Left lung (tissue), 14 donors: ENCODE measurements at regions of chrX and their contacts with region 1.

Region 1: DNA sequence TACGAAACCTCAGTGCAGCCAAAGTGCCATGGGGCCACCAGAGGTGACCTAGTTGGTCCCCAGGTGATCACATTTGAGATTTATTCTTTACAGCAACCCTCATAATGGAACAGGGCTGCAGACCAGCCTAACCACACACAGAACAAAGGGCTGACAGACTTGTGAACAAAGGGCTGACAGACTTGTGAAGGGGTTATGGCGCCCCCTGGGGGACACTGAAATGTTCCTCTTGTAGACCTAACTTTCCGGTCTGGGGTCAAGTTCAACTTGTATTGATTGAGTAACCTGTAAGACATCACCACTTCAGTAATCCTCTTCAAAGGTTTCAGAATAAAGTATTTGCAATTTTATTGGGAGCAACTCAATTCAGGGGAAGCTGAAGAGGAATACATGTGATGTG is 175.9 kb upstream of the RPS6KA3 start:
- DNase-seq: peak; percentile 37 to 80 (median 72)
- ATAC-seq: peak; percentile 97
- H3K4me3 ChIP-seq: no peak overlapping the region
- H3K27ac ChIP-seq: no peak overlapping the region
- H3K4me1 ChIP-seq: peaks cover 0 to 5% of the 10 kb centered on the region in 2 donors
- H3K27me3 ChIP-seq: peaks cover 0 to 3% of the 10 kb centered on the region in 2 donors
- CTCF ChIP-seq: peak; percentile 54 to 57

Region 2: GRCh38 chrX:20197641-20198210 is 244.9 kb before region 1 on chrX:
- intact Hi-C with region 1: no loop called
- DNase-seq: no peak
- ATAC-seq: no peak
- H3K4me3 ChIP-seq: no peak overlapping the region
- H3K27ac ChIP-seq: no peak overlapping the region
- H3K4me1 ChIP-seq: no peaks in the 10 kb centered on the region
- H3K27me3 ChIP-seq: peaks cover 0 to 3% of the 10 kb centered on the region in 2 donors
- CTCF ChIP-seq: no peak

Region 3: GRCh38 chrX:20252381-20253231 is 190.0 kb before region 1 on chrX:
- intact Hi-C with region 1: loop called in 1 of 2 experiments (anchors 5 kb)
- DNase-seq: peak in 2 of 4 donors; percentile 54 to 58
- ATAC-seq: peak; percentile 96
- H3K4me3 ChIP-seq: no peak overlapping the region
- H3K27ac ChIP-seq: no peak overlapping the region
- H3K4me1 ChIP-seq: peaks cover 3 to 18% of the 10 kb centered on the region in 2 donors
- H3K27me3 ChIP-seq: no peaks in the 10 kb centered on the region
- CTCF ChIP-seq: peak; percentile 68 to 70

Region 4: GRCh38 chrX:20325786-20326388 is 116.7 kb before region 1 on chrX:
- intact Hi-C with region 1: no loop called
- DNase-seq: no peak
- ATAC-seq: no peak
- H3K4me3 ChIP-seq: no peak overlapping the region
- H3K27ac ChIP-seq: no peak overlapping the region
- H3K4me1 ChIP-seq: peaks cover 0 to 5% of the 10 kb centered on the region in 2 donors
- H3K27me3 ChIP-seq: no peaks in the 10 kb centered on the region
- CTCF ChIP-seq: no peak

Region 5: DNA sequence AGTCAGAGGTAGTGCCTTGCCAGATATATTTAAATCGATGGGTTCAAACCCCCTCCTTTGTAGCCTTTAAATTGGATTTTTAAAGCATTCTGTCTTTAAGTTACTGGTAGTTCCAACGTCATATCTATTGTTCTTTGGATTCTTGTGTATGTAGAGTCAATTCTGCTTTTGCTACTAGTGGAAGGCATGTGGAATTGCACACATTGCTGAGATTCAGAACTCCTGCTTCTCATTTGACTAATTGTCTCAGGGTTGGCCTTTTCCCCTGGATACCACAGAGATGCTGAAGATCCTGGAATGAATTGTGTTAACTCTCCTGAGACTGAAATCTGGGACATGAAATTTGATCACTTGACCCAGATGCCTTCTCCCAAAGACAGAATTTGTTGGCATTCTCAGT is 152.4 kb after region 1 on chrX:
- intact Hi-C with region 1: no loop called
- DNase-seq: no peak
- ATAC-seq: no peak
- H3K4me3 ChIP-seq: no peak overlapping the region
- H3K27ac ChIP-seq: no peak overlapping the region
- H3K4me1 ChIP-seq: no peaks in the 10 kb centered on the region
- H3K27me3 ChIP-seq: peaks cover 0 to 2% of the 10 kb centered on the region in 2 donors
- CTCF ChIP-seq: no peak